CD4-positive, alpha-beta T cell (primary cell): ENCODE measurements at regions of chr17 and their contacts with region 1.

Region 1: DNA sequence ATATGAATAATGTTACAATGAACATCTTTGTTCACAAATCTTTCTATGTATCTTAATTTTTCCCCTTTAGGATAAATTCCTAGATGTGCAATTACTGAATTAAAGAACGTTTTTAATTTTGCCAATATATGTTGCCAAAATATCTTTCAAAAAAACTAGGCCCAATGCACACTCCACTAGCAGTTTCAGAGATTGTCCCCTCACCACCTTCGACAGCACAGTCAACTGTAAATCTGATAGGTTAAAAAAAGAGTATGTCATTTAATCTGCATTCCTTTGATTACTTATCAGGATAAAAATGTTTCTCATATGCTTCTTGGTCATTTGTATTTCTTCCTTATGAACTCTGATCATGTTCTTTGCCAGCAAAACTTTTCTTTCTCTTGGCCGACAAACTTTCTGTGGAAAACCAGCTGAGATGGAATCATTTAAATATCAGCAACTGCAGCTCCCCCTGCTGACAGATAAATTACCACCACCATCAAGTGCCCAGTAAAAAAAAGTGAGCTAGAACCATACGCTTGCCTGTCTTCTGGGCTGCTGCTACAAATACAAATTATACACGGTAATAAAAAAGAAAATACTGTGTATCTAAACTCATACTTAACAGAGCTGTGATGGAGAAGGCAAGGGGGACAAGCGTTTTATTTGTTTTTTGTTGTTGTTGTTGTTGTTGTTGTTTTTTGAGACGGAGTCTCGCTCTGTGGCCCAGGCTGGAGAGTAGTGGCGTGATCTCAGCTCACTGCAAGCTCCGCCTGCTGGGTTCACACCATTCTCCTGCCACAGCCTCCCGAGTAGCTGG is 19.6 kb upstream of the KANSL1 start:
- DNase-seq: peak in 13 of 14 experiments; percentile 33 to 89 (median 52)
- ATAC-seq: peak; percentile 93
- H3K4me3 ChIP-seq: no peak overlapping the region
- H3K4me3 Mint-ChIP-seq: no peak overlapping the region
- H3K27ac ChIP-seq: no peak overlapping the region
- H3K27ac Mint-ChIP-seq: peak overlapping the region; percentile 30
- H3K4me1 ChIP-seq: peaks cover 6% of the 10 kb centered on the region
- H3K4me1 Mint-ChIP-seq: peaks cover 22% of the 10 kb centered on the region
- H3K27me3 ChIP-seq: no peaks in the 10 kb centered on the region
- H3K27me3 Mint-ChIP-seq: no peaks in the 10 kb centered on the region
- CTCF ChIP-seq: peak; percentile 81

Region 2: DNA sequence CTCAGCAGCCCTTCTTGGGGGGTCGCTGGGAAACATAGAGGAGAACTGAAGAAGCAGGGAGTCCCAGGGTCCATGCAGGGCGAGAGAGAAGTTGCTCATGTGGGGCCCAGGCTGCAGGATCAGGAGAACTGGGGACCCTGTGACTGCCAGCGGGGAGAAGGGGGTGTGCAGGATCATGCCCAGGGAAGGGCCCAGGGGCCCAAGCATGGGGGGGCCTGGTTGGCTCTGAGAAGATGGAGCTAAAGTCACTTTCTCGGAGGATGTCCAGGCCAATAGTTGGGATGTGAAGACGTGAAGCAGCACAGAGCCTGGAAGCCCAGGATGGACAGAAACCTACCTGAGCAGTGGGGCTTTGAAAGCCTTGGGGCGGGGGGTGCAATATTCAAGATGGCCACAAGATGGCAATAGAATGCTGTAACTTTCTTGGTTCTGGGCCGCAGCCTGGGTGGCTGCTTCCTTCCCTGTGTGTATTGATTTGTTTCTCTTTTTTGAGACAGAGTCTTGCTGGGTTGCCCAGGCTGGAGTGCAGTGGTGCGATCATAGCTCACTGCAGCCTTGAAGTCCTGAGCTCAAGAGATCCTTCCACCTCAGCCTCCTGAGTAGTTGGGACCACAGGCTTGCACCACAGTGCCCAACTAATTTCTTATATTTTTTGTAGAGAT is 210.4 kb before region 1 on chr17:
- CTCF ChIA-PET with region 1: interaction called, 5 read pairs
- POLR2A ChIA-PET with region 1: interaction called, 3 read pairs
- intact Hi-C with region 1: loop called (anchors 1 kb)
- DNase-seq: peak; percentile 53 to 84 (median 72)
- ATAC-seq: peak; percentile 96
- H3K4me3 ChIP-seq: no peak overlapping the region
- H3K4me3 Mint-ChIP-seq: no peak overlapping the region
- H3K27ac ChIP-seq: no peak overlapping the region
- H3K27ac Mint-ChIP-seq: no peak overlapping the region
- H3K4me1 ChIP-seq: peaks cover 7% of the 10 kb centered on the region
- H3K4me1 Mint-ChIP-seq: no peaks in the 10 kb centered on the region
- H3K27me3 ChIP-seq: no peaks in the 10 kb centered on the region
- H3K27me3 Mint-ChIP-seq: peaks cover 5% of the 10 kb centered on the region
- CTCF ChIP-seq: peak; percentile 84

Region 3: DNA sequence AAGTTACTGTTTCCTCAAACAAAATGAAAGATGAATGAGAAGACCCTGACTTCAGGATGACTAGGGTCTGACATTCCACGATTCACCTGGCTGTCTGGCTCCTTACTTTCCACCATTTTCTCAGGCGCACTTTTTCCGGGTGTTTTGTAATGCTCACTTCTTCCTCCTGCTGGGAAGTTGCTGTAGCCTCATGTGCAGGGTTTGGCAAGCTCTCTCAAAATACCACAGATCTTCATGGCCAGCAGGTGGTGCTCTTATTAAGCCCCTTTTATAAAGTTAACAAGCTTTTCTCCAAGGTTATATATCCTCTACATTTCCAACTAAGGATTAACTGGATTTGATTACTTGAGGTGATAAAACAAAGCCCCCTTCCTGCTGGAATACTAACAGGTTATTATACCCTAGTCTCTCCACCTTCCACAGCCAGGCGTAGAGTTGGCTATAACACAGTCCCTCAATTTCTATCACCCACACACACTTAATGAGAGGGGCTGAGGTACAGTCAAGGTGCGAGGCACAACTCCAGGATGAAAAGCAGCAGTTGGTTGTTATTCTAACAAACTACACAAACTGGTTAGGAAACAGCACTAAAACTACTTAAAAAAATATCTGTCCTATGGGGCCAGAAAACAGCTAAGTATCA is 168.4 kb before region 1 on chr17:
- CTCF ChIA-PET with region 1: interaction called, 31 read pairs
- POLR2A ChIA-PET with region 1: interaction called, 13 read pairs
- intact Hi-C with region 1: loop called (anchors 1 kb)
- DNase-seq: peak in 13 of 14 experiments; percentile 23 to 78 (median 48)
- ATAC-seq: peak; percentile 74
- H3K4me3 ChIP-seq: no peak overlapping the region
- H3K4me3 Mint-ChIP-seq: no peak overlapping the region
- H3K27ac ChIP-seq: no peak overlapping the region
- H3K27ac Mint-ChIP-seq: peak overlapping the region; percentile 54
- H3K4me1 ChIP-seq: no peaks in the 10 kb centered on the region
- H3K4me1 Mint-ChIP-seq: peaks cover 18% of the 10 kb centered on the region
- H3K27me3 ChIP-seq: no peaks in the 10 kb centered on the region
- H3K27me3 Mint-ChIP-seq: no peaks in the 10 kb centered on the region
- CTCF ChIP-seq: peak; percentile 80

Region 4: GRCh38 chr17:46184696-46185095 is 28.1 kb before region 1 on chr17:
- CTCF ChIA-PET with region 1: interaction called, 19 read pairs
- POLR2A ChIA-PET with region 1: no interaction called
- intact Hi-C with region 1: no loop called
- DNase-seq: no peak
- ATAC-seq: no peak
- H3K4me3 ChIP-seq: no peak overlapping the region
- H3K4me3 Mint-ChIP-seq: peak overlapping the region; percentile 3
- H3K27ac ChIP-seq: no peak overlapping the region
- H3K27ac Mint-ChIP-seq: peak overlapping the region; percentile 49
- H3K4me1 ChIP-seq: peaks cover 72% of the 10 kb centered on the region
- H3K4me1 Mint-ChIP-seq: peaks cover 95% of the 10 kb centered on the region
- H3K27me3 ChIP-seq: no peaks in the 10 kb centered on the region
- H3K27me3 Mint-ChIP-seq: no peaks in the 10 kb centered on the region
- CTCF ChIP-seq: no peak

Region 5: GRCh38 chr17:46199379-46199778 is 13.5 kb before region 1 on chr17:
- CTCF ChIA-PET with region 1: interaction called, 58 read pairs
- POLR2A ChIA-PET with region 1: interaction called, 3 read pairs
- intact Hi-C with region 1: loop called in 1 of 2 experiments (anchors 1 kb)
- DNase-seq: no peak
- ATAC-seq: no peak
- H3K4me3 ChIP-seq: no peak overlapping the region
- H3K4me3 Mint-ChIP-seq: no peak overlapping the region
- H3K27ac ChIP-seq: no peak overlapping the region
- H3K27ac Mint-ChIP-seq: peak overlapping the region; percentile 28
- H3K4me1 ChIP-seq: peaks cover 39% of the 10 kb centered on the region
- H3K4me1 Mint-ChIP-seq: peaks cover 66% of the 10 kb centered on the region
- H3K27me3 ChIP-seq: no peaks in the 10 kb centered on the region
- H3K27me3 Mint-ChIP-seq: no peaks in the 10 kb centered on the region
- CTCF ChIP-seq: no peak

Region 6: GRCh38 chr17:47099987-47100711 is 887.3 kb after region 1 on chr17:
- CTCF ChIA-PET with region 1: no interaction called
- POLR2A ChIA-PET with region 1: no interaction called
- intact Hi-C with region 1: loop called in 1 of 2 experiments (anchors 5 kb)
- DNase-seq: peak; percentile 80 to 92 (median 88)
- ATAC-seq: peak; percentile 100
- H3K4me3 ChIP-seq: peak overlapping the region; percentile 60
- H3K4me3 Mint-ChIP-seq: peak overlapping the region; percentile 100
- H3K27ac ChIP-seq: no peak overlapping the region
- H3K27ac Mint-ChIP-seq: peak overlapping the region; percentile 89
- H3K4me1 ChIP-seq: peaks cover 36% of the 10 kb centered on the region
- H3K4me1 Mint-ChIP-seq: peaks cover 37% of the 10 kb centered on the region
- H3K27me3 ChIP-seq: no peaks in the 10 kb centered on the region
- H3K27me3 Mint-ChIP-seq: no peaks in the 10 kb centered on the region
- CTCF ChIP-seq: no peak